CD8-positive, alpha-beta T cell (primary cell): ENCODE measurements at regions of chr5 and their contacts with region 1.

Region 1: DNA sequence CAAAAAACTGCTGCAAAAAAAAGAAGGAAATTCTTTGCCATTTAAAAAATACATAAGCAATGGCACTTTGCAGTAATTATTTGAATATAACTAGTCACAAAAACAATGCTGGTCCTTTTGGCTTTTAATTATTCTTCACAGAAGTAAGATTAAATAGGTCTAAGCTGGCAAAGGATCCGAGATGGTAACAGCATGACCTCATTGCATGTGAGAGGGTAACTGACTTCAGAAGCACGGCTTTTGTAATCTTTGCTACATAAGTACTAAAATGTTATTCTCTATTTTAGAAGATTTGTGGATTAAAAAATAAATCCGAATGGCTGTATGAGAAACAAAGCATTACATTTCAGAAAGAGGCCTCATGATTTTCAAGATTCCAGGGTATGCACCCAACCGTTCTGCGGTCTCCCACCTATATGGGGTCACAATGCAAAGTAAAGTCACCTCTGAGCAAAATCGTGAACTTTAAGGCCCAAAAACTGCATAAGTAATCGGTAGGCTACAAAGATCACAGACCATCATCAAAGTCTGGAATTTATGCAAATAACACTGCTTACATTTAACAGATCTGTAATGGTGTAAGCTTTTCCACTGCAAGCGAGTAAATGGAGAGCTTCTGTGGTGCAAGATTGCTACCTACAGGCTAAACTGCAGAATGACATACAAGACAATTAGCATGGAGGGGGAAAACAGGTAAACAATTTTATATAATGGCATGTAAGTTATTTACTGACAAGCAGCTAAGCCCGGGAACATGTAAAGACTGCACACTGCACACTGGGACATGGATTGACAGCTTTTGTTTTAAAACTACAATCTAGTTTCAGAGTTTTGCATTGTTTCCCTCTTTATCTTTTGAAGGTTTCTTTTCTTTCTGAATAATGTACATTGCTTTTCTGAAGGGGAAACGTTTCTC is 231.6 kb downstream of the SLF1 start:
- DNase-seq: peak in 7 of 9 experiments; percentile 3 to 70 (median 25)
- ATAC-seq: peak; percentile 89
- H3K4me3 ChIP-seq: no peak overlapping the region
- H3K4me3 Mint-ChIP-seq: no peak overlapping the region
- H3K27ac ChIP-seq: no peak overlapping the region
- H3K27ac Mint-ChIP-seq: no peak overlapping the region
- H3K4me1 ChIP-seq: no peaks in the 10 kb centered on the region
- H3K4me1 Mint-ChIP-seq: no peaks in the 10 kb centered on the region
- H3K27me3 ChIP-seq: no peaks in the 10 kb centered on the region
- H3K27me3 Mint-ChIP-seq: no peaks in the 10 kb centered on the region
- CTCF ChIP-seq: peak; percentile 78

Region 2: DNA sequence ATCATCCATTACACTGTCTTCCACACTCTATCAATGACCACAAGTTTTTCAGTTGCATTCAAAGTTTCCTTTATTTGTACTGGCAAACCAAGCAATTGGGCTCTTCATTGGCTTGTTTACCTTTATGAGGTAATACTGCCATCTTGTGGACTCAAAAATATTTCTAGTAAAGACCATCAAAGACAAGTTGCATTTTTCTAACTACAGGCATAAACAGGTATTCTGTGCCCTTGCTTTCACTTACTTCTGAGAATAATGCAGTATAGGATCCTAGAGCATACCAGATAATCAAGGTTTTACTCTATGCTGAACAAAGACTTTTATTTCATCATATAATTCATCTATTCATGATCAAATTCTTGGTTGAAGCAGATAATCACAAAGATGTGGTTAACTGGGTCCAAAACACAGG is 934.9 kb before region 1 on chr5:
- CTCF ChIA-PET with region 1: no interaction called
- POLR2A ChIA-PET with region 1: no interaction called
- intact Hi-C with region 1: loop called in 1 of 2 experiments (anchors 10 kb)
- DNase-seq: peak in 2 of 9 experiments; percentile 45 to 56
- ATAC-seq: no peak
- H3K4me3 ChIP-seq: no peak overlapping the region
- H3K4me3 Mint-ChIP-seq: no peak overlapping the region
- H3K27ac ChIP-seq: no peak overlapping the region
- H3K27ac Mint-ChIP-seq: no peak overlapping the region
- H3K4me1 ChIP-seq: no peaks in the 10 kb centered on the region
- H3K4me1 Mint-ChIP-seq: no peaks in the 10 kb centered on the region
- H3K27me3 ChIP-seq: no peaks in the 10 kb centered on the region
- H3K27me3 Mint-ChIP-seq: no peaks in the 10 kb centered on the region
- CTCF ChIP-seq: peak; percentile 67

Region 3: DNA sequence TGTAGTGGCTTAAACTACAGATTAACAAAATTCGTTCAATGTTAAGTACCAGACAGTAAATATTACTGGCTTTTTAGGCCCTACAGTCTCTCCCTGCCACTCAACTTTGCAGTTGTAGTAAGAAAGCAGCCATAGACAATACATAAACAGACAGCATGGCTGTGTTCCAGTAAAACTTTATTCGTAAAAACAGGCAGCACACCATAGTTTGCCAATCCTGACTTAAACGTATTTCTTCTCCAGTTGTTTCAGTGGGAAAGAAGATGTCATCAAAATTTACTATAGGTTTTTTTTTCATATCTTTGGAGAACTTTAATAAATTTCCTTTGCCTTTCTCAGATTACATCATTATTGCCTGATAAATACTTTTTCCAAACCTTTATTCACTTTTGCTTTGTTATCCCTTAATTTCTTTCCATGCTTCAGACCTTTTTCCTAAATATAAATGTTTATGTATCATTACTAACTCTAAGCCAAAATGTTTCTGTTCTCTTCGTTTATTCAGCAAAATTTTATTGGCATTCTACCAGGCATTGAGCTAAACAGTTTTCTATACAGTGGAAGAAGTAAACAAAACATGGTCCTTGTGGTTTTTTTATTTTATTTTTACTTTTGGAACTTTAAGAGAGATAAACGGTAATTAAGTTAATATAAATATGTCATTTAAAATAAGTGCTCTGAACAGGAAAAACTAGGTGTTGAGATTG is 167.1 kb before region 1 on chr5:
- CTCF ChIA-PET with region 1: no interaction called
- POLR2A ChIA-PET with region 1: no interaction called
- intact Hi-C with region 1: no loop called
- DNase-seq: no peak
- ATAC-seq: no peak
- H3K4me3 ChIP-seq: no peak overlapping the region
- H3K4me3 Mint-ChIP-seq: no peak overlapping the region
- H3K27ac ChIP-seq: no peak overlapping the region
- H3K27ac Mint-ChIP-seq: no peak overlapping the region
- H3K4me1 ChIP-seq: no peaks in the 10 kb centered on the region
- H3K4me1 Mint-ChIP-seq: no peaks in the 10 kb centered on the region
- H3K27me3 ChIP-seq: no peaks in the 10 kb centered on the region
- H3K27me3 Mint-ChIP-seq: no peaks in the 10 kb centered on the region
- CTCF ChIP-seq: no peak

Region 4: GRCh38 chr5:94693043-94693822 is 156.8 kb before region 1 on chr5:
- CTCF ChIA-PET with region 1: no interaction called
- POLR2A ChIA-PET with region 1: no interaction called
- intact Hi-C with region 1: loop called in 1 of 2 experiments (anchors 5 kb)
- DNase-seq: peak in 2 of 9 experiments; percentile 56 to 69
- ATAC-seq: peak; percentile 49
- H3K4me3 ChIP-seq: no peak overlapping the region
- H3K4me3 Mint-ChIP-seq: no peak overlapping the region
- H3K27ac ChIP-seq: peak overlapping the region in 1 of 2 experiments; percentile 29
- H3K27ac Mint-ChIP-seq: no peak overlapping the region
- H3K4me1 ChIP-seq: no peaks in the 10 kb centered on the region
- H3K4me1 Mint-ChIP-seq: no peaks in the 10 kb centered on the region
- H3K27me3 ChIP-seq: no peaks in the 10 kb centered on the region
- H3K27me3 Mint-ChIP-seq: no peaks in the 10 kb centered on the region
- CTCF ChIP-seq: peak; percentile 53

Region 5: GRCh38 chr5:94740286-94740685 is 109.8 kb before region 1 on chr5:
- CTCF ChIA-PET with region 1: interaction called, 8 read pairs
- POLR2A ChIA-PET with region 1: no interaction called
- intact Hi-C with region 1: loop called (anchors 1 kb)
- DNase-seq: no peak
- ATAC-seq: no peak
- H3K4me3 ChIP-seq: no peak overlapping the region
- H3K4me3 Mint-ChIP-seq: no peak overlapping the region
- H3K27ac ChIP-seq: no peak overlapping the region
- H3K27ac Mint-ChIP-seq: no peak overlapping the region
- H3K4me1 ChIP-seq: no peaks in the 10 kb centered on the region
- H3K4me1 Mint-ChIP-seq: no peaks in the 10 kb centered on the region
- H3K27me3 ChIP-seq: no peaks in the 10 kb centered on the region
- H3K27me3 Mint-ChIP-seq: peaks cover 3% of the 10 kb centered on the region
- CTCF ChIP-seq: no peak